AG04450 (cell line): ENCODE measurements at regions of chr6 and their contacts with region 1.

Region 1: DNA sequence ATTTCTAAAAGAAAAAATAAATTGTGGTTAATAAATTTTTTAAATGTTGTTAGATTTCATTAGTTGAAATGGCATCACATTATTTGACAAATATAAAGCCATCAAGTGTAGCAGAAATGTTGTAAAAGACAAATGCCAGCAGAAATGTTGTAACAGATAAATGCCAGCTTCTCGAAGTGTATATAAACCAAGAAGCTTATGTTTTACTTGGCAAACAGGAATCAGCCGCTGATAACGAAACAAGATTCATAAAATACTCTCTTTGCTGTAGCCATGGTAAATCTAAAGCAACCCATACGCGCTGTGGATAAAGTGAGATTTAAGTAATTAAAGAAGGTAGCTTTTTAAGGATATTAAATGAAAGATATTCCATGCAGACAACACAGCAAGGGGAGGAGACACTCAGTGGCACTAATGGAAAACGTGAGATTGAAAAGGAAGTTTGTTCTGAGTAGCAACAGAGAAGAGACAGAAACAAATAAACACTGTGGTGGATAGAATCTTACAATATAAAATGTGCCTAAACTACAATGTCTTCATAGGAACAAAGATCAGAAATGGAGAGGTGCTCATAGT is 29.6 kb downstream of the BTBD9 start:
- DNase-seq: no peak
- H3K4me3 ChIP-seq: no peak overlapping the region
- H3K27ac ChIP-seq: no peak overlapping the region
- H3K27me3 ChIP-seq: no peaks in the 10 kb centered on the region
- CTCF ChIP-seq: no peak

Region 2: GRCh38 chr6:38588631-38589366 is 21.3 kb before region 1 on chr6:
- CTCF ChIA-PET with region 1: interaction called, 3 read pairs
- POLR2A ChIA-PET with region 1: interaction called, 12 read pairs
- DNase-seq: no peak
- H3K4me3 ChIP-seq: no peak overlapping the region
- H3K27ac ChIP-seq: no peak overlapping the region
- H3K27me3 ChIP-seq: no peaks in the 10 kb centered on the region
- CTCF ChIP-seq: no peak

Region 3: GRCh38 chr6:38688579-38689087 is 78.5 kb after region 1 on chr6:
- CTCF ChIA-PET with region 1: no interaction called
- POLR2A ChIA-PET with region 1: no interaction called
- DNase-seq: no peak
- H3K4me3 ChIP-seq: no peak overlapping the region
- H3K27ac ChIP-seq: no peak overlapping the region
- H3K27me3 ChIP-seq: no peaks in the 10 kb centered on the region
- CTCF ChIP-seq: no peak